ENCODE measurements at regions of chr15 and their contacts with region 1.

Region 1: DNA sequence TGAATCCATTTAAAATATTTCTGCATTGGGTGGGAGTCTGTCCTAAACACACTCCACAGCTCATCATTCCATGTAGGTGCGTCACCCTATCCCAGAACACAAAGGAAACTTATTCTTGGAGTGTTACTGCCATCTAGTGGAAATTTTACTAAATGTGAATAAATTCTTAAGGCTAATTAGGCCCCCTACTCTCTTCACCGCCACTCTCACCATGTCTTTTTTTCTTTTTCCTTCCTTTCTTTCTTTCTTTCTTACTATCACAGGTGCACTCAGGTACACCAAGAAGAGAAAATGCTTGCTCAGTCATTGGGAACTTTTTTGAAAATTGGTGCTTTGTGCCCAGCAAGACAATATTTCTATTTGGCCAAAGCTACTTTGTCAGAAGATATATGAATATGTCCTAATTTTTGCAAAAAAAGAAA is 26.4 kb upstream of the ATP8B4 start:
- DNase-seq: peak; percentile 62
- H3K4me3 Mint-ChIP-seq: no peak overlapping the region
- H3K27ac Mint-ChIP-seq: no peak overlapping the region
- H3K4me1 Mint-ChIP-seq: peaks cover 45% of the 10 kb centered on the region
- H3K27me3 Mint-ChIP-seq: no peaks in the 10 kb centered on the region

Region 2: GRCh38 chr15:49235446-49236124 is 909.9 kb before region 1 on chr15:
- intact Hi-C with region 1: loop called (anchors 1 kb)
- DNase-seq: peak; percentile 86
- H3K4me3 Mint-ChIP-seq: no peak overlapping the region
- H3K27ac Mint-ChIP-seq: peak overlapping the region; percentile 11
- H3K4me1 Mint-ChIP-seq: peaks cover 15% of the 10 kb centered on the region
- H3K27me3 Mint-ChIP-seq: no peaks in the 10 kb centered on the region

Region 3: DNA sequence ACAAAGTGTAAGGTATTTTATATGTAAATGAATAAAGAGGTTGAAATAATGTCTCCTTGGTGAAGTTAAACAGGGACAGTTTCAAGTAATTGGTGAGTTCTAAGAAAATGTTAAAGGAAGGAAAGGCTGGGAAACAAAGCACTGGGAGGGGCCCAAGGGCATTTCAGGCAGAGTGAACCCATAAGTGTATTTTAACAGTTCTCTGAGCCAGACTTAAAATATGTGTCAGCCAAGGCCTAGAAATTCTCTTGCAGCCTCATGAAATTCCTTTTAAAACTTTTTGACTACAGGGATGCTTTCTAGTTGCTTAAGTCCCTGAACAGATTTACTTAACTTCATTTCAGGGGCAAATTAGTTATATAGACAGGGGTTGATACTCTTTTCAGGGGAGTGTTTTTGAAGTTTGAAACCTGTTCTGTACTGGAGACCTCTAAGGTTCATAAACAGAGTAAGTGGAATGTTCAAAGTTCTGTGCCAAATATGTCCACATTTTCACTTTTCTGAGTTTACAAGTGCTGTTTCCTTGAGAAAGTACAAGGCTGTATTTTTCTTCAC is 897.8 kb before region 1 on chr15:
- intact Hi-C with region 1: no loop called
- DNase-seq: no peak
- H3K4me3 Mint-ChIP-seq: no peak overlapping the region
- H3K27ac Mint-ChIP-seq: no peak overlapping the region
- H3K4me1 Mint-ChIP-seq: peaks cover 14% of the 10 kb centered on the region
- H3K27me3 Mint-ChIP-seq: no peaks in the 10 kb centered on the region

Region 4: DNA sequence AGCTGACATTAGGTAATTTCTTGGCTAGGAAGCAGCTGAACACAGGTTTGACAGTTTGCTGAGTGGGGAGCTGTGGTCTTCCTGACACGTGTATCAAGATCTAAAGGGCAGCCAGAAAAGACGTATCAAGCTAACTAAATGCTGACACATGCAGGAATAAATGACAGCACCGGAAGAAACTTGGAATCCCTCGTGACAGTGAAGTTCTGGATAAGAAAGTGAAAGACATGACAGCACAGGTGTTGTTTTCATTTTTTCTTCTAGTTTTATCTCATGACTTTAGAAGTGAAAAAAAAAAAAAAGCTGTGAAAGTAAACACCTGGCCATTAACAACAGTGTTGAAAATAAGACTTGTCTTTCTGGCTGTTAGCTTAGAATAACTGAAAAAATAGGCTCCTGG is 673.7 kb before region 1 on chr15:
- intact Hi-C with region 1: loop called (anchors 5 kb)
- DNase-seq: peak; percentile 72
- H3K4me3 Mint-ChIP-seq: peak overlapping the region; percentile 3
- H3K27ac Mint-ChIP-seq: no peak overlapping the region
- H3K4me1 Mint-ChIP-seq: peaks cover 15% of the 10 kb centered on the region
- H3K27me3 Mint-ChIP-seq: peaks cover 13% of the 10 kb centered on the region

Region 5: GRCh38 chr15:49990835-49991545 is 154.5 kb before region 1 on chr15:
- intact Hi-C with region 1: loop called (anchors 10 kb)
- DNase-seq: no peak
- H3K4me3 Mint-ChIP-seq: no peak overlapping the region
- H3K27ac Mint-ChIP-seq: no peak overlapping the region
- H3K4me1 Mint-ChIP-seq: peaks cover 5% of the 10 kb centered on the region
- H3K27me3 Mint-ChIP-seq: no peaks in the 10 kb centered on the region

Region 6: DNA sequence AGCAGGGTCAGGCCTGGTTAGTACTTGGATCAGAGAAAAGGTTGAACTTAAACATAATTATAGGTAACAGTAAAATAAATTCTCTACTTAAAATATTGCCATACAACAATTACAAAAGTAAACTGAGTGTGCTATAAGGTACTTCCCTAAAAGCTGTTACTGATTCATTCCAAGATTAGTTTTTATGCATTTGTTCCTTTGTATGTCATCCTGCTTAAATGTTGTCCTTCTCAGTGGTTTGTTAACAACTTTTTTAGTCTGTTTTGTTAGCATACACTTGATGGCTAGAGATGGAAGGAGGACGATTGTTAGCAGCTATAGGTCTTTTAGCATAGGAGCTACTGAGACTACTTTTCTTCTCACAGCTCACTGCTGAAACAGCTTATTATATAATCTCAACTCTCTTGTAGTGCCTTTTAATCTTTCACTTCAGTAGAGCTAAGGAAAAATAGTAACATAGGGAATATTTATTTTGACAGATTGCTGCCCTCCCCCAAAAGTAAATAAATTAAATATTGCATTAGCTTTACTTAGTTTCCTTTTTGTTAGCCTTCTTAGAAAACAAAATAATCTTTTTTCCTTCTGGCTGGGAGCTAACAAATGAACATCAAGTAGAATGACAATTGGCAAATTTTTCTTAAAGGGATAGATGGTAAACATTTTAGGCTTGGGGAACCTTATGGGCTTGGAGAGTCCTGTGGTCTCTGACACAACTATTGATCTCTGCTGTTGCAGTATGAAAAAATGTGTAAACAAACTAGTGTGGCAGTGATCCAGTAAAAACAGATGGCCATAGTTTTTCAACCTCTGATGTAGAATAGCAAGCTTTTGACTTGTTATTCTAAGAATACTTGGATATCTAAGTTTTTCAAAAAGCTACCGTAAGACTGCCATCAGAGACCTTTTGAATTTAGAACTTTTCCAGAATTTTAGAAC is 318.2 kb after region 1 on chr15:
- intact Hi-C with region 1: no loop called
- DNase-seq: no peak
- H3K4me3 Mint-ChIP-seq: no peak overlapping the region
- H3K27ac Mint-ChIP-seq: peak overlapping the region; percentile 81
- H3K4me1 Mint-ChIP-seq: peaks cover 17% of the 10 kb centered on the region
- H3K27me3 Mint-ChIP-seq: no peaks in the 10 kb centered on the region

Measured in activated CD4-positive, alpha-beta T cell treated with anti-CD3 and anti-CD28 coated beads, Interleukin-2, amount 10 ng/mL, durations not matched to agents 24 days and 14 days (primary cell).